IMR-90 (cell line): ENCODE measurements at regions of chr1 and their contacts with region 1.

Region 1: DNA sequence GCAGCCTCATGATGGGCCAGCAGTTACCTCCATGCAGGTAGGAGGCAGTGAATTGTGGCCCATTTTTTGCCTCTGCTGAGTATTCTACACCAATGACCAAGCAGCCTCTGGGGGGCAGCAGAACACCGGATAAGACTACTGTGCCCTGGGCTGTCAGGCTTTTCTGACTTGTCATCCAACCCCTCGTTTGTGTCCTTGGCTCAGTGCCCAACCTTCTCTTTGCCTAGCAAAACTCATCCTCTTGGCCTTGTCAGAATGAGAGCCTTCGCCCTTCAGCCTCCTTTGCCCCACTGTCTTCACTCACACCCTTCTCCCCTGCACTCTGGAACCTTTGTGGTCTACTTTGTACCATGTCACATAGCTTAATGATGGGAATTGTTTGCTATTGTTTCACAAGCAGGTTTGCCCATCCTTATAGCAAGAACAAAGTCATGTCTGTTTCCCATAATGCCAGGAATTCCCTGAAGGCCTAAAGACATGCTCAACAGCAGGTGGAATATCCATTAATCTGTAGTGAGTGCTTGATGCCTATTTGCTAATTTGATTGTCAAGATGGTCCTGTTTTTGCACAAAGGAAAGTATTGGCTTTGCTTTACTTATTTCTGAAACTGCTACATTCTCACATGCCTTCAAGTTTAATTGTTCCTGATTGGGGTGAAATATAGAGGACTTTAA is 255.9 kb downstream of the HHAT start:
- DNase-seq: peak; percentile 78
- ATAC-seq: peak; percentile 91
- H3K4me3 ChIP-seq: no peak overlapping the region
- H3K27ac ChIP-seq: no peak overlapping the region
- H3K4me1 ChIP-seq: peaks cover 3% of the 10 kb centered on the region; the same call in 1 of the 2 replicates
- H3K27me3 ChIP-seq: no peaks in the 10 kb centered on the region
- CTCF ChIP-seq: peak; percentile 92
- POLR2A ChIP-seq: no peak
- RAD21 ChIP-seq: peak; percentile 99

Region 2: DNA sequence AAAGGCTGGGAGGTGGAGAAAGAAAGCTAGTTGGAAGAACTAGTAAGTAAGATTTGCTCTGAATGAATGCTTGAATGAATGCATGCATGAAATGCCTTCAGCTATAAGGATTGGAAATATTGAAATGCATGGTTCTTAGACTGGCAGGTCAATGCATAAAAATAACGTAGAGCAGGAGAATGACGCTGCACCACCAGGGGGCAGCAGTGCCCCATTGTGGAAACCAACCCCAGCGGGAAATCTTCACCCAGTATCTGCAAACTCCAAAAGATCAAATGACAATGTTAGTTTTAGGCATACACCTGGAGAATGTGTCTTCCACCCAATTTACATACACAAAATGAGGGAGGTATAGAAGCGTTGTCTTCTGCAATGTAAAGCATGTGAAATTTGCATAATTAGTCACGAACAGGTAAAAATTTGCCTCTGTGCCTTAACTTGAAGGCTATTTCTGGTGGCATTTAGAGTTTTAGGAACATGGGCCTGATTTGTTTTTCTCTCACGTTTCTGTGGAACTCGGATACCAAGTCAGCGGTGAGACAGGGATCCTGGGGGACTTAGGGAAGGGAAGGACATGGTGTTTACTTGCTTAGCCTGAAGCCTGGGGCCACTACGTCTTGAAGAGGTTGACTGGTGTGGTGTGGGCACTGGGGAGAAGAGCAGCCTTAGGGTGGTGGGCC is 177.2 kb before region 1 on chr1:
- CTCF ChIA-PET with region 1: interaction called, 5 read pairs
- POLR2A ChIA-PET with region 1: interaction called, 3 read pairs
- dilution Hi-C with region 1: no loop called
- in situ Hi-C with region 1: loop called (anchors 25 kb)
- intact Hi-C with region 1: loop called (anchors 1 kb)
- DNase-seq: peak; percentile 56
- ATAC-seq: peak; percentile 95
- H3K4me3 ChIP-seq: no peak overlapping the region
- H3K27ac ChIP-seq: no peak overlapping the region
- H3K4me1 ChIP-seq: no peaks in the 10 kb centered on the region
- H3K27me3 ChIP-seq: no peaks in the 10 kb centered on the region
- CTCF ChIP-seq: peak; percentile 98
- POLR2A ChIP-seq: no peak
- RAD21 ChIP-seq: peak; percentile 94

Region 3: GRCh38 chr1:210448297-210448892 is 136.2 kb before region 1 on chr1:
- CTCF ChIA-PET with region 1: interaction called, 7 read pairs
- POLR2A ChIA-PET with region 1: no interaction called
- dilution Hi-C with region 1: no loop called
- in situ Hi-C with region 1: loop called (anchors 10 kb)
- intact Hi-C with region 1: loop called (anchors 1 kb)
- DNase-seq: peak; percentile 69
- ATAC-seq: peak; percentile 93
- H3K4me3 ChIP-seq: no peak overlapping the region
- H3K27ac ChIP-seq: no peak overlapping the region
- H3K4me1 ChIP-seq: no peaks in the 10 kb centered on the region
- H3K27me3 ChIP-seq: no peaks in the 10 kb centered on the region
- CTCF ChIP-seq: peak; percentile 85
- POLR2A ChIP-seq: no peak
- RAD21 ChIP-seq: peak; percentile 87

Region 4: DNA sequence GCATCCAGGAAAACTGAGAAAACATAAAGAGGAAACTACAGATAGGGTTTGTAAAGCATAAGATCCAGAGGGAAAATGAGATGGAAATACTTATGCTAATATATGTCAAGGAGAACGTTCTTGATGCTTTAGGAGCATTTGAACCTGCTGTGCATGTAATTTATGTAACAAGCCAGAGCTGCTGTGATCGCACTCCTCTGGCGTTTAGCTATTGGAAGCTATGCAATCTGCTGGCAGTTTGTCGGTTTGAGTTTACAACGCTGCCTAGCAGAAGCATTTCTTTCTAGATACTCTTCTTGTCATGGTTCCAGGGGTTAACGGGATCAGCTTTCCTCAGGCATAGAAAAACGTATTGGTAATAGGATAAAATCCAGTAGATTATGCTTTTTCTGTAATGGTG is 366.7 kb after region 1 on chr1:
- CTCF ChIA-PET with region 1: interaction called, 3 read pairs
- POLR2A ChIA-PET with region 1: no interaction called
- dilution Hi-C with region 1: no loop called
- in situ Hi-C with region 1: no loop called
- intact Hi-C with region 1: loop called (anchors 5 kb)
- DNase-seq: no peak
- ATAC-seq: no peak
- H3K4me3 ChIP-seq: no peak overlapping the region
- H3K27ac ChIP-seq: no peak overlapping the region
- H3K4me1 ChIP-seq: no peaks in the 10 kb centered on the region
- H3K27me3 ChIP-seq: no peaks in the 10 kb centered on the region
- CTCF ChIP-seq: no peak
- POLR2A ChIP-seq: no peak
- RAD21 ChIP-seq: no peak

Region 5: GRCh38 chr1:211258756-211259637 is 674.4 kb after region 1 on chr1 and contains the start of gene RCOR3:
- CTCF ChIA-PET with region 1: no interaction called
- POLR2A ChIA-PET with region 1: no interaction called
- dilution Hi-C with region 1: no loop called
- in situ Hi-C with region 1: no loop called
- intact Hi-C with region 1: loop called (anchors 2 kb)
- DNase-seq: peak; percentile 87
- ATAC-seq: peak; percentile 86
- H3K4me3 ChIP-seq: peak within 1 kb of the TSS; percentile 100
- H3K27ac ChIP-seq: peak within 1 kb of the TSS; percentile 100
- H3K4me1 ChIP-seq: peaks cover 2% of the 10 kb centered on the region; the same call in 1 of the 2 replicates
- H3K27me3 ChIP-seq: no peaks in the 10 kb centered on the region
- CTCF ChIP-seq: peak; percentile 56
- POLR2A ChIP-seq: no peak; the same call in 1 of the 2 replicates
- RAD21 ChIP-seq: no peak
- total RNA-seq, gene RCOR3: 8.1 and 11.9 TPM in 2 replicates